ENCODE measurements at regions of chr3 and their contacts with region 1.

Region 1: DNA sequence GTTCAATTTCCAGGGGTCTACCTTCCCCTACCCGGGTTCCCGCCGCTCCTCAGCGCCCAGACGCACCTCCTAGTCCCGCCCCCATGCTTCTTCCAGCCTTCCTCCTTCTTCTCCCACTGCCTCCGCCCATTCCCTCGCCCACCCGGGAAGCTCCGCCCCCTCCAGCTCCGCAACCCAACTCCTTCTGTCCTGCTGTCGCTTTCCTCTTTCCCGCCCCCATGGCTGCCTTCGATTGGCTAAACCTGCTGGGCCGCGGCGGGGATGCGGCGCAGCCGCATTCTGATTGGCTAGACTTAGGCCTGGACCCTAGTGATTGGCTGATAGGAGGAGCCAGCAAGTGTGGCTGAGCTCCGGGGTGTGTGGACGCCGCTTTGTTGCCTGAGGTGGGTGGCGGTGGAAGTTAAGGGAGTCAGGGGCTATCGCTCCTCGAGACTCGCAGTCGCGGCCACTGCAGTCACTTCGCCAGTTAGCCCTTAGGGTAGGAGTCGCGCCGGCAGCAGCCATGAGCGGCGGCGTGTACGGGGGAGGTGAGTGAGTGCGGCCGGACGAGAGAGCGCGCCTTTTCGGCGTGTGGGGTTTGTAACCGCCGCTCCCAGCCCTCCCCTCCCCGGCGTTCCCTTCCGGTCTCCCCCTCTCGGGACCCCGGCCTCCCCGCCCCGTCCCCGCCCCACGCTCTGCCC is at the start of gene ACTL6A:
- DNase-seq: peak; percentile 98
- H3K4me3 Mint-ChIP-seq: peak within 1 kb of the TSS; percentile 98
- H3K27ac Mint-ChIP-seq: peak within 1 kb of the TSS; percentile 98
- H3K4me1 Mint-ChIP-seq: peaks cover 30% of the 10 kb centered on the region
- H3K27me3 Mint-ChIP-seq: peaks cover 14% of the 10 kb centered on the region
- total RNA-seq, gene ACTL6A: 114 and 121 TPM in 2 replicates

Region 2: GRCh38 chr3:179015551-179016020 is 547.1 kb before region 1 on chr3:
- intact Hi-C with region 1: loop called (anchors 2 kb)
- DNase-seq: peak; percentile 62
- H3K4me3 Mint-ChIP-seq: no peak overlapping the region
- H3K27ac Mint-ChIP-seq: peak overlapping the region; percentile 2
- H3K4me1 Mint-ChIP-seq: peaks cover 35% of the 10 kb centered on the region
- H3K27me3 Mint-ChIP-seq: peaks cover 17% of the 10 kb centered on the region

Region 3: GRCh38 chr3:179071550-179072397 is 491.0 kb before region 1 on chr3 and contains the start of gene ZMAT3:
- intact Hi-C with region 1: loop called (anchors 2 kb)
- DNase-seq: peak; percentile 83
- H3K4me3 Mint-ChIP-seq: peak within 1 kb of the TSS; percentile 98
- H3K27ac Mint-ChIP-seq: peak within 1 kb of the TSS; percentile 94
- H3K4me1 Mint-ChIP-seq: peaks cover 31% of the 10 kb centered on the region
- H3K27me3 Mint-ChIP-seq: no peaks in the 10 kb centered on the region
- total RNA-seq, gene ZMAT3: 8.9 and 10.6 TPM in 2 replicates

Region 4: DNA sequence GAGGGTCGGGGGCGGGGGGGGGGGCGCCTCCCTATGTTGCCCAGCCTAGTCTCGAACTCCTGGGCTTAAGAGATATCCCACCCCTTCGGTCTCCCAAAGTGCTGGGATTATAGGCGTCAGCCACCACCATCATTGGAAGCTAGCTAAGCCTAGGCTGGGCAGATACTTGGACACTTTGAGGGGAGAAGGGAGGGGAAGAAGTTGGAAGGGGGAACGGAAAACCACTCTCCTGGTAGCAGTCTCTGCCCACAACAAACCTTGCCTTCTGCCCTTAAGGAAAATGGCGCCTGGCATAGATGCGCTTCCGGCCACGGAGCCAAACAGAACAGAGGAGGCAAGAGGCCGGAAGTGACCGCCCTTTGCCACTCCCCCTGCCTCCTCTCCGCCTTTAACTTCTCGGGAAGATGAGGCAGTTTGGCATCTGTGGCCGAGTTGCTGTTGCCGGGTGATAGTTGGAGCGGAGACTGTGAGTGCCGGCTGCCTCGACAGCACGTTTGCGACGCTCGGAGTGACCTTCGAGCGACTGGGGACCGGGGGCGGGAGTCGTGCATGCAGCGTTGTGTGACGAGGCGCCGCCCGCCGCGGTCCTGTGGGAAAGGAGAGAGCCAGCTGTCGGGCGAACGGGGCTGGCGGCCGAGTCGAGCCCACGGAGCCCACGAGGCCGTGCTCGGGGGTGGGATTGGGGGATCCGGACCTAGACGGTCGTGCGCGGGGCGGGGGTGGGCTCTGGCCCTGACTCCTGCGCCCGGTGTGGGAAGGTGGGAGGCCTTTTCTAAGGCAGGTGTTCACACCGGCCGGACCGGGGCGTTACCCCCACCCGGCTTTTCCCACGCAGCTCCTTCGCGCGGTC is 215.2 kb before region 1 on chr3 and contains the start of gene MFN1:
- intact Hi-C with region 1: loop called (anchors 1 kb)
- DNase-seq: peak; percentile 88
- H3K4me3 Mint-ChIP-seq: peak within 1 kb of the TSS; percentile 91
- H3K27ac Mint-ChIP-seq: peak within 1 kb of the TSS; percentile 89
- H3K4me1 Mint-ChIP-seq: peaks cover 15% of the 10 kb centered on the region
- H3K27me3 Mint-ChIP-seq: no peaks in the 10 kb centered on the region
- total RNA-seq, gene MFN1: 32.2 and 38.2 TPM in 2 replicates

Region 5: DNA sequence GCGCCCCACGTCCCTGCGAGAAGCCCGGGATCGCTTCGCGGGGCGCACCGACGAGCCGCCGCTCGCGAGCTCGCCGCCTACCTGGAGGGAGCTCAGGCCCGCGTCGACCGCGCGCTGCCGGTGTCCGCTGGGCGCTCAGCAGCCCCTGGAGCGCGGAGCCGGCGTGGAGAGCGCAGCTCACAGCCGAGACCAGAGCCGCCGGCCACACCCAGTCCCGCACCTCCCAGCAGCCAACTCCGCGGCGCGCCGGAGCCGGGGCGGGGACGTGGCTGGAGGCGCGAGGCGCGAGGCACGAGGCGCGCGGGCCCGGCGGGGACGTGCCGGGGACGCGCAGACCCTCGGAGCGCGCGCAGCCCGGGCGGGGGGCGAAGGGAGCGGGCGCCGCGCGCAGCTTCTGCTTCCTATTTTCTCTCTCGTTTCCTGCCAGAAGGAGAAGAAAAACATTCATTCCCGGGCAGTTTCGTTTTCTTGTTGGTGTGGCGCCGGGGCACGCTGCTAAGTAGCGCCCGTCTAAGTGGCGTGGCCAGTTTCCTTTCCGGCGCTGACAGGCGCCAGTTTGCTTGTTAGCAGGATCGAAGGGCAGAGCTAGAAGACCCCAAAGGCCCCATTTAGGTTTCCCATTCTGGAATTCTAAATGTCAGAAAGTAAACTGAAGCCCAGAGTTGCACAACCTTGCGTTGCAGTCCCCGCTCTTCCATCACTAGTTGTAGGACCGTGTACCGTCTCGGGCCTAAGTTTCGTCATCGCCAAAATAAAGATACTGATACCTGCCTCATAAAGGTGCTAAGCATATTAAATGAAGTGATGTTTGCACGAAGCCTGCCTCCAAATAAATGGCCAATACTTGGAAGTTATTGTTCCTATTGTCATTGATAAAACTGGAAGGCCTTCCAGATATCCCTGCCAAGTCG is 111.2 kb before region 1 on chr3 and contains the start of gene GNB4:
- intact Hi-C with region 1: loop called (anchors 2 kb)
- DNase-seq: peak; percentile 54
- H3K4me3 Mint-ChIP-seq: peak within 1 kb of the TSS; percentile 83
- H3K27ac Mint-ChIP-seq: peak within 1 kb of the TSS; percentile 85
- H3K4me1 Mint-ChIP-seq: peaks cover 25% of the 10 kb centered on the region
- H3K27me3 Mint-ChIP-seq: peaks cover 77% of the 10 kb centered on the region
- total RNA-seq, gene GNB4: 12.0 and 13.9 TPM in 2 replicates

Region 6: GRCh38 chr3:179526482-179526881 is 36.2 kb before region 1 on chr3:
- intact Hi-C with region 1: no loop called
- DNase-seq: no peak
- H3K4me3 Mint-ChIP-seq: no peak overlapping the region
- H3K27ac Mint-ChIP-seq: no peak overlapping the region
- H3K4me1 Mint-ChIP-seq: no peaks in the 10 kb centered on the region
- H3K27me3 Mint-ChIP-seq: peaks cover 19% of the 10 kb centered on the region

Region 7: DNA sequence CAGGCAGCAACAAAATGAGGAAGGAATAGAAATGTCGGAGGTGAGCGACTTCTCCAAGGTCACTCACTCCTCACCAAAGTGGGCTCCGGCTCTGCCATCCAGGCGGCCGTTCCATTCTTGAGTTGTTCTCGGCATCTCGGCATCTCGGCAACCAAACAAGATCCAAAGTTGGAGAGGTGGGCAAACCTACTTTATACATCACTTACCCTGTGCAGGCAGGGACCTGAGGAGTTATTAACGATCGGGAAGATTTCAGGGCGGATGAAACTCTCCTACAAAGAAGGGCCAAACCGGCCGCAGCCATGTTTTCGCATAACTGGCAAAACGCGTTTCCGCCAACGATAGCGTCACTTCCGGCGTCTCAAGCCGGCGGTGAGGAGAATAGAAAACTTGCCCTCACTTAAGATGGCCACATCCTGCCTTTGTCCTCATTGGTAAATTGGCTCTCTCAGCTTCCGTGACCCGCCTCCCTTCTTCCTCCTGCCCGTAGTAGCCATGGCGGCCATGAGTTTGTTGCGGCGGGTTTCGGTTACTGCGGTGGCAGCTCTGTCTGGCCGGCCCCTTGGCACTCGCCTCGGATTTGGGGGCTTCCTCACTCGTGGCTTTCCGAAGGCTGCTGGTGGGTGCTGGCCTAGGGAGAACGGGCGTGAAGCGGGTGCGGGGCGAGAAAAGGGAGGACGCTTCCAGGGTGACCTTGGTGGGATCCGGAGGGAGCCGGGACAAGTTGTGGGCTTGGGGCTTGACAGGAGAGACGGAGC is 41.8 kb after region 1 on chr3 and contains the starts of genes MRPL47 and NDUFB5:
- intact Hi-C with region 1: loop called (anchors 1 kb)
- DNase-seq: peak; percentile 91
- H3K4me3 Mint-ChIP-seq: peak within 1 kb of the TSS; percentile 99
- H3K27ac Mint-ChIP-seq: peak within 1 kb of the TSS; percentile 99
- H3K4me1 Mint-ChIP-seq: peaks cover 31% of the 10 kb centered on the region
- H3K27me3 Mint-ChIP-seq: no peaks in the 10 kb centered on the region
- total RNA-seq, gene MRPL47: 61.2 and 64.4 TPM in 2 replicates
- total RNA-seq, gene NDUFB5: 90.3 and 91.6 TPM in 2 replicates

Region 8: DNA sequence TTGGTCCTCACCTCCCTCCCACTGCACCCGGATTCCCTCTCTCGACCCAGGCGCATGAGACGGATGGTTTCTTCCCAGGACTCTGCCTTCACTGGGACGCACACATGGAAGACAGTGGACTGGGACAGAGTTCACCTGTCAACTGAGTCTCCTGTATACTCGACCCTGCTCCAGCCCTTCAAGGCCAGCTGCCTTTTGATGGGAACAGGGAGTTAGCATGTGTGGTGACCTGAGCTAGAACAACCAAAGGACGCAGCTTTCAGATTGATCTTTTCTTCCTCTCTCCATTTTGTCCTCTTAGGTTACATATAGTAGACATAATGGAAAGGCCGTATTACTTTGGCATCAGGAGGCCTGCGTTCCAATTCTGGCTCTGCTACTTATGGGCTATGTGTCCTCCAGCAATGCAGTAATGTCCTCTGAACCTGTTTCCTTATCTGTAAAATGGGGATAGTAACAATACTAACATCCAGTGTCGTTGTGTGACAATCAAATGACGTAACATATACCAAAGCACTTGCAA is 379.9 kb after region 1 on chr3:
- intact Hi-C with region 1: no loop called
- DNase-seq: no peak
- H3K4me3 Mint-ChIP-seq: no peak overlapping the region
- H3K27ac Mint-ChIP-seq: no peak overlapping the region
- H3K4me1 Mint-ChIP-seq: no peaks in the 10 kb centered on the region
- H3K27me3 Mint-ChIP-seq: peaks cover 32% of the 10 kb centered on the region

Region 9: GRCh38 chr3:180199417-180199995 is 636.8 kb after region 1 on chr3:
- intact Hi-C with region 1: no loop called
- DNase-seq: no peak
- H3K4me3 Mint-ChIP-seq: no peak overlapping the region
- H3K27ac Mint-ChIP-seq: no peak overlapping the region
- H3K4me1 Mint-ChIP-seq: no peaks in the 10 kb centered on the region
- H3K27me3 Mint-ChIP-seq: no peaks in the 10 kb centered on the region

Measured in activated T-helper 2 cell treated with anti-CD3 and anti-CD28 coated beads, Interferon-gamma antibody, Interleukin-2, Interleukin-4, amounts not matched to agents 10 μg/mL and 5 μg/mL and 100 μg/mL, durations not matched to agents 14 hours and 24 hours and 36 hours (primary cell).